Activated CD4-positive, alpha-beta T cell treated with anti-CD3 and anti-CD28 coated beads, Interleukin-2, amount 10 ng/mL, durations not matched to agents 24 days and 14 days (primary cell): ENCODE measurements at regions of chr2 and their contacts with region 1.

Region 1: GRCh38 chr2:69436938-69437750 is at the start of gene NFU1:
- DNase-seq: peak; percentile 95
- H3K4me3 Mint-ChIP-seq: peak within 1 kb of the TSS; percentile 95
- H3K27ac Mint-ChIP-seq: peak within 1 kb of the TSS; percentile 98
- H3K4me1 Mint-ChIP-seq: peaks cover 17% of the 10 kb centered on the region
- H3K27me3 Mint-ChIP-seq: no peaks in the 10 kb centered on the region
- total RNA-seq, gene NFU1: 30.4 and 32.3 TPM in 2 replicates

Region 2: DNA sequence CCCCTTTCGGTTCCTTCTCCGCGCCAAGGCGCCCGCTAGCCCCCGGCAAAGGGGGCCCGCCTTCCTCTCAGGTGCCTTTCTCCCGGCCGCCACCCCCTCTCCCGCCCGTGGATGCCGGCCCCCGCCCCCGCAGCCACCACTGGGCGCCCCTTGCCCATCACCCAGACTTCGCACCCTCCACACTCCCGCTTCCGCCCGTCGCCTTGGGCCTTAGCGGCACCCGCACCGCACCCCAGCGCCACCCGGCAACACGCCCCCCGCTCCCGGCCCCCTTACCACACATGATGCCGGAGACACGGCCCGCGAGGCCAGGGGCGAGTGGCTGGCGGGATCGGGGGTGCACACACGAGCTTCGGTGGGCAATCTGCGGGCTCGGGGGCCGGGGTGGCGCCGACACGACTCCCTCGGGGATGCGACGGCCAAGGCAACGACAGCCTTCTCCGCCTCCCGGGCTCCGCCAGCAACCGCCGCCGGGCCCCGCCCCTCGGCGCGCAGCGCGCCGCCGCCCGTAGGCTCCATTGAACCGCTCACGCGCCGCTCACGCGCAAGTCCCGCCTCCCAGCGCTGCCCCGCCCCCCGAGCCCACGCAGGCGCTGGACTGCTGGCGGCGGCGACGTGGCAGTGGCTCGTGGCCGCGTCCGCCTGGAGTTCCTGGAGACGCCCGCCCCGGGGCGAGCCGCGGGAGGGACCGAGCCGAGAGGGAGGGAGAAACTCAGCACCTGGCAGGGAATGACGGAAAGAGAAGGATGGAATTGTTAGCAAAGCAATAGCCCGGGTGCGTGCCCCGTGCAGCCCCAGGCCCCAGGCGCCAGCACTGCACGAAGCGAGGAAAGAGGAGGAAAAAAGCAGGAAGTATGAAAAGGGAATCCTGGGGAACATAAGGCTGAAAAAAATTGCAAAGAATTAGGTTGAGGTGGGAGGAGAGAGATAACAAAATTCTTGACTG is 50.1 kb before region 1 on chr2 and contains the start of gene GFPT1:
- intact Hi-C with region 1: loop called (anchors 1 kb)
- DNase-seq: peak; percentile 99
- H3K4me3 Mint-ChIP-seq: peak within 1 kb of the TSS; percentile 98
- H3K27ac Mint-ChIP-seq: peak within 1 kb of the TSS; percentile 95
- H3K4me1 Mint-ChIP-seq: peaks cover 40% of the 10 kb centered on the region
- H3K27me3 Mint-ChIP-seq: no peaks in the 10 kb centered on the region
- total RNA-seq, gene GFPT1: 48.8 and 50.6 TPM in 2 replicates

Region 3: GRCh38 chr2:69453475-69454129 is 16.5 kb after region 1 on chr2:
- intact Hi-C with region 1: loop called (anchors 1 kb)
- DNase-seq: no peak
- H3K4me3 Mint-ChIP-seq: no peak overlapping the region
- H3K27ac Mint-ChIP-seq: peak overlapping the region; percentile 35
- H3K4me1 Mint-ChIP-seq: peaks cover 17% of the 10 kb centered on the region
- H3K27me3 Mint-ChIP-seq: peaks cover 4% of the 10 kb centered on the region

Region 4: GRCh38 chr2:69477627-69478026 is 40.5 kb after region 1 on chr2:
- intact Hi-C with region 1: loop called (anchors 5 kb)
- DNase-seq: no peak
- H3K4me3 Mint-ChIP-seq: no peak overlapping the region
- H3K27ac Mint-ChIP-seq: peak overlapping the region; percentile 2
- H3K4me1 Mint-ChIP-seq: peaks cover 32% of the 10 kb centered on the region
- H3K27me3 Mint-ChIP-seq: no peaks in the 10 kb centered on the region

Region 5: GRCh38 chr2:69509007-69509749 is 72.0 kb after region 1 on chr2:
- intact Hi-C with region 1: loop called (anchors 5 kb)
- DNase-seq: no peak
- H3K4me3 Mint-ChIP-seq: peak overlapping the region; percentile 20
- H3K27ac Mint-ChIP-seq: peak overlapping the region; percentile 88
- H3K4me1 Mint-ChIP-seq: peaks cover 33% of the 10 kb centered on the region
- H3K27me3 Mint-ChIP-seq: no peaks in the 10 kb centered on the region

Region 6: DNA sequence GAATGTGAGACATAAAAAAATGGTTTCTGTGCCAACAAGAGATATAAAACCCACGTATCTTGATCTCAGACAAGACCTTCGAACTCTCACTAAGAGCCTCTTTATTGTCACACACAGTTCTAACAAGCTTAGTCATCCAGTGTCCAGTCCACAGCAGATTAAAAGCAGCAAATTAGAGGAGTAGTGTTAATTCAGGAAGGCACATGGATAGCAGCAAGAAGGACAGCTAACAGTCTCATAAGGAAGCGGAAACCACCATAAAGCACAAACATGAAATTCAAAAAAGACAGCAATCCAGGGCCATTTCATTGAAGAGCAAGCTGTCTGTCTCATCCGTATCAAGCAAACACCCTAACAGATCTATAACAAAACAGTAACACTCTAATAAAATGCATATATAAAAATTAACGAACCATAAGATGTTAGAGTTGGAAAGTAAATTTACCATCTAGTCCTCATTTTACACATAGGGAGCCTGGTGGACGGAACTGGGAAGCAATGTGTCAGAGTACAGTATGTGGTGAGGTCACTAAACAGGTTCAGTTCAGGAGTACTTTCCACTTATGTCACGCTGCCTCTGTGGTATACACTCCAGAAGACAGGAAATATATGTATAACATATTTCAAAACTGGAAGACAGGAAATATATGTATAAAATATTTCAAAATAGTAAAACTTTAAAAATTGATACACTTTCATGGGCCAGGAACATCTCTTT is 188.1 kb after region 1 on chr2:
- intact Hi-C with region 1: loop called (anchors 5 kb)
- DNase-seq: no peak
- H3K4me3 Mint-ChIP-seq: no peak overlapping the region
- H3K27ac Mint-ChIP-seq: no peak overlapping the region
- H3K4me1 Mint-ChIP-seq: peaks cover 10% of the 10 kb centered on the region
- H3K27me3 Mint-ChIP-seq: no peaks in the 10 kb centered on the region

Region 7: GRCh38 chr2:69652221-69652651 is 215.1 kb after region 1 on chr2:
- intact Hi-C with region 1: no loop called
- DNase-seq: no peak
- H3K4me3 Mint-ChIP-seq: peak overlapping the region; percentile 4
- H3K27ac Mint-ChIP-seq: peak overlapping the region; percentile 31
- H3K4me1 Mint-ChIP-seq: peaks cover 42% of the 10 kb centered on the region
- H3K27me3 Mint-ChIP-seq: no peaks in the 10 kb centered on the region

Region 8: GRCh38 chr2:69715964-69716363 is 278.8 kb after region 1 on chr2:
- intact Hi-C with region 1: no loop called
- DNase-seq: no peak
- H3K4me3 Mint-ChIP-seq: no peak overlapping the region
- H3K27ac Mint-ChIP-seq: peak overlapping the region; percentile 1
- H3K4me1 Mint-ChIP-seq: peaks cover 17% of the 10 kb centered on the region
- H3K27me3 Mint-ChIP-seq: peaks cover 3% of the 10 kb centered on the region

Region 9: DNA sequence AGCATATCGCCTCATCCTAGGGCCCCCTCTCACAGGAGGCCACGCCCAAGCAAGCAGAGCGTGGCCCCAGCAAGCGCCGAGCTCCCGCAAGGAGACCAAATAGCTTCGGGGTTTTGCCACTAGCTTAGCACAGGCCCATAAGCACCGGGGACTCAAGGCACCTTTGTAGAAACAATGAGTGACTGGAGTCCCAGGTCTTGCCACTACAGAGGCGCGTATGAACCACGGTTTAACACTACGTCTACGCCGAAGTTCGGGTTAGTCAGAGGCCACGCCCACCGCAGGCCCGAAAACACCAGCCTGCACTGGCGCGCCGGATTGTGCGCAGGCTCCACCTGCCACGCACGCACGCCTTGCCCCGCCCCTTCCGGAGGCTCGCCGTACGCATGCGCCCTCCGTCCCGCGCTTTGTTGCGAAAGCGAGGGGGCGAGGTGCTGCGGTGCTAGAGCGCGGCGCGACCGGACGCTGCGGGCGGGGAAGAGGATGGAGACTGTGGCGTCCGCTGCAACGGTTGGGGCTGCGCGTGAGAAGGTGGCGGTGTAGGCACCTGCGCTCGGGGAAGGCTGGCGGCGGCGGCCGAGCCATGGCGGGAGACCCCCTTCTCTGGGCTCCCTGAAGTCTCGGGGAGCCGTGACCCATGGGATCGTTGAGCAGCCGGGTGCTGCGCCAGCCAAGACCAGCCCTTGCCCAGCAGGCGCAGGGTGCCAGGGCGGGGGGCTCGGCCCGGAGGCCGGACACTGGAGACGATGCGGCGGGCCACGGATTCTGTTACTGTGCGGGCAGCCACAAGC is 392.3 kb after region 1 on chr2 and contains the start of gene GMCL1:
- intact Hi-C with region 1: loop called (anchors 1 kb)
- DNase-seq: peak; percentile 100
- H3K4me3 Mint-ChIP-seq: peak within 1 kb of the TSS; percentile 95
- H3K27ac Mint-ChIP-seq: peak within 1 kb of the TSS; percentile 97
- H3K4me1 Mint-ChIP-seq: peaks cover 43% of the 10 kb centered on the region
- H3K27me3 Mint-ChIP-seq: no peaks in the 10 kb centered on the region
- total RNA-seq, gene GMCL1: 25.9 and 28.0 TPM in 2 replicates

Region 10: DNA sequence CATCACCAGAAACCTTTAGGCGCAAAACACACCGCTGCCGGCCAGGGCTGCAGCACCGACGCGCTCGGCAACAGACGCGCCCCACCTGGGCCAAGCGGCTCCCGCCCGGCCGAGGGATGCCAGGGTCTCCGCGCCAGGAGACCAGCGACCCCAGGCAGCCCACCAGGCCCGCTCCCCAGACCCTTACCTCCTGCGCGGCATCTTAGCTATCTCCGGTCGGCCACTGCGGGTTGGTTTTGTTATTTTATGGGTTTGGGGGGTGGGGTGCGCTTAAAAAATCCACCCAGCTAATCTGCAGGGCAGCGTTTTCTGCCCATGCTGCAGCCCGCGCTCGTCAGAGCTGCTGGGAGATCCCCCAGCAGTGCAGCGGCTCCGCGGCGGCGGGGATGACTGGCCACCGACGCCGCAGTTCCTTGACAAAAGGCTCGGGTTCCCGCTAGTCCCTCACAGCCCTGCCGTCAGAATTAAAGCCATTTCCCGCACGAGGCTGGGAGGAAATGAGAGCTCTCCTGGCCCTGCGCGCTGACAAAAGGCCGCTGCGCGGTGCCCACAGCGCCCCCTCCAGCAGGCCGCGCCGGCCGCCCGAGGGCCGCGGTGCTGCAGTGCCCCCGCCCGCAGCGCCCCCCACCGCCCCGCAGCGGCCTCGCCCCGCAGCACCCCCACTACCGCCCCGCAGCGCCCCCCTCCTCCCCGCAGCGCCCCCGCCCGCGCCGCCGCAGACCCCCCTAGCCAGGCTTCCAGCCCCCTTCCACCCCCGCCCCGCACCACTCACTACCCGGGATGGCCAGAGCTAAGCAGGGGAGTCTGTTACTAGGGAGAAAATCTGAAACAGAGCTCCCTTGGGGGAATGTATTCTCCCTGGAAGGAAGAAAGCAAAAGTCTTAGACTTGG is 1330.8 kb after region 1 on chr2 and contains the start of gene ADD2:
- intact Hi-C with region 1: no loop called
- DNase-seq: peak; percentile 84
- H3K4me3 Mint-ChIP-seq: peak within 1 kb of the TSS; percentile 89
- H3K27ac Mint-ChIP-seq: peak within 1 kb of the TSS; percentile 68
- H3K4me1 Mint-ChIP-seq: peaks cover 10% of the 10 kb centered on the region
- H3K27me3 Mint-ChIP-seq: peaks cover 43% of the 10 kb centered on the region
- total RNA-seq, gene ADD2: 6.1 and 8.2 TPM in 2 replicates